ENCODE measurements at regions of chr21 and their contacts with region 1.

Region 1: DNA sequence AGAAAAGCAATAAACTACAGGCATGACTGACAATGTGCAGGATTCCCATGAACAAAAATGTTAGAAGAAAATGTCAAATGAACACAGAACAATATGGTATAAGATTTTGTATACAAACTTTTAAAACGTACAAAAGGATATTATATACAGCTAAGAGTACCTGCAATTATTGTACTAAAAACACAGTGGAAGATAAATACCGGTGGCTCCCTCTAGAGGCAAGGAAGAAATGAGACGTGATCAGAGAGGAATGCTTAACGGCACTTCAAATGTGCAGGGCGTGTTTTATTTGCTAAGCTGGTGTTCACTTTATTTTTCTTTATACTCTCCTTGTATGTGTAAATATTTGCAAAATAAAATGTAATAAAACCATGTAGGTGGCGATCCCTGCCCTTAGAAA is 191.8 kb upstream of the SAMSN1 start:
- DNase-seq: peak; percentile 50 to 58
- H3K4me3 ChIP-seq: no peak overlapping the region
- H3K4me3 Mint-ChIP-seq: no peak overlapping the region
- H3K27ac Mint-ChIP-seq: no peak overlapping the region
- H3K4me1 ChIP-seq: no peaks in the 10 kb centered on the region
- H3K4me1 Mint-ChIP-seq: no peaks in the 10 kb centered on the region
- H3K27me3 ChIP-seq: no peaks in the 10 kb centered on the region; the same call in 1 of the 2 replicates
- H3K27me3 Mint-ChIP-seq: no peaks in the 10 kb centered on the region
- CTCF ChIP-seq: peak; percentile 38 to 61

Region 2: DNA sequence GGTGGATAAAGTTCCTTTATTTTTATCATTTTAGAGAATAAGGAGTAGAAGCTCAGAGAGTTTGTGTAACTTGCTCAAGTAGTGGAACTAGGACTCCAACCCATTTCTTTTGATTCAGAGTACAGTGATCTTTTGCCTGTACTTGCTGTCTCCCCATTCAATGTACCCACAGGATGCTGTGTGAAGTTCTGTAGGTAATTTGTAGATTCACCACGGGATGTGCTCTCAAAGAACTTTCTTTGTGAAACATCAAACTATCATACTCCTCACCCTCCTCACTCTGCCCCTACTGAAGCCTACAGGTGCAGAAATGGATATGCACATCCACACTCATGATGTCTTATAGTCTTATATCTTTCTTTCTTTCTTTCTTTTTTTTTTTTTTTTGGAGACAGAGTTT is 289.1 kb before region 1 on chr21:
- CTCF ChIA-PET with region 1: interaction called, 3 read pairs
- POLR2A ChIA-PET with region 1: no interaction called
- intact Hi-C with region 1: loop called (anchors 10 kb)
- DNase-seq: no peak
- H3K4me3 ChIP-seq: no peak overlapping the region
- H3K4me3 Mint-ChIP-seq: no peak overlapping the region
- H3K27ac Mint-ChIP-seq: no peak overlapping the region
- H3K4me1 ChIP-seq: peaks cover 8% of the 10 kb centered on the region
- H3K4me1 Mint-ChIP-seq: peaks cover 6% of the 10 kb centered on the region
- H3K27me3 ChIP-seq: no peaks in the 10 kb centered on the region
- H3K27me3 Mint-ChIP-seq: no peaks in the 10 kb centered on the region
- CTCF ChIP-seq: no peak

Region 3: GRCh38 chr21:14519000-14519399 is 218.9 kb before region 1 on chr21:
- CTCF ChIA-PET with region 1: no interaction called
- POLR2A ChIA-PET with region 1: no interaction called
- intact Hi-C with region 1: loop called (anchors 10 kb)
- DNase-seq: no peak
- H3K4me3 ChIP-seq: no peak overlapping the region
- H3K4me3 Mint-ChIP-seq: no peak overlapping the region
- H3K27ac Mint-ChIP-seq: no peak overlapping the region
- H3K4me1 ChIP-seq: no peaks in the 10 kb centered on the region
- H3K4me1 Mint-ChIP-seq: no peaks in the 10 kb centered on the region
- H3K27me3 ChIP-seq: no peaks in the 10 kb centered on the region
- H3K27me3 Mint-ChIP-seq: peaks cover 5% of the 10 kb centered on the region
- CTCF ChIP-seq: no peak

Region 4: DNA sequence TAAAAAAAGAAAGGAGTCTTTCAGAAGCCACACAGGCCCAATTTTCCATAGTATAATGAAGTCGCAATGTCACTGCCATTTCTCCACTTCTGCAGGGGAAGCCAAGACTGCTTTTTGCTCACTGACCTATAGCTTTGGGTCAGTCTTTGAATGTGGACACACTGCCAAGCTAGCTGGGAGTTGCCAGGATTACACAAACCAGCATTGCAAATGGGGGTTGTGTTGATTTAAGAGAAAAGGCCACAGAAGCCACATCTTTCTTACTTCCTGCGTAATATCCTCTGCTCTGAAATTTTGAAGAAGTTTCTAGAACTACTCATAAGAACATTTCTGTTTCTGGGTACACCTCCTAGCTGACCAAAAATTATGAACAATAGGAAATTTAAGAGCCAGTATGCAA is 146.0 kb before region 1 on chr21:
- CTCF ChIA-PET with region 1: no interaction called
- POLR2A ChIA-PET with region 1: no interaction called
- intact Hi-C with region 1: loop called (anchors 10 kb)
- DNase-seq: no peak
- H3K4me3 ChIP-seq: no peak overlapping the region
- H3K4me3 Mint-ChIP-seq: no peak overlapping the region
- H3K27ac Mint-ChIP-seq: no peak overlapping the region
- H3K4me1 ChIP-seq: no peaks in the 10 kb centered on the region
- H3K4me1 Mint-ChIP-seq: no peaks in the 10 kb centered on the region
- H3K27me3 ChIP-seq: no peaks in the 10 kb centered on the region
- H3K27me3 Mint-ChIP-seq: no peaks in the 10 kb centered on the region
- CTCF ChIP-seq: no peak

Region 5: GRCh38 chr21:14825514-14825974 is 87.6 kb after region 1 on chr21:
- CTCF ChIA-PET with region 1: no interaction called
- POLR2A ChIA-PET with region 1: no interaction called
- intact Hi-C with region 1: no loop called
- DNase-seq: no peak
- H3K4me3 ChIP-seq: no peak overlapping the region
- H3K4me3 Mint-ChIP-seq: no peak overlapping the region
- H3K27ac Mint-ChIP-seq: no peak overlapping the region
- H3K4me1 ChIP-seq: no peaks in the 10 kb centered on the region
- H3K4me1 Mint-ChIP-seq: no peaks in the 10 kb centered on the region
- H3K27me3 ChIP-seq: no peaks in the 10 kb centered on the region
- H3K27me3 Mint-ChIP-seq: no peaks in the 10 kb centered on the region
- CTCF ChIP-seq: no peak